ENCODE measurements at regions of chr1 and their contacts with region 1.

Region 1: GRCh38 chr1:27145934-27146354 is 9.0 kb downstream of the SLC9A1 start:
- DNase-seq: peak; percentile 94
- ATAC-seq: peak; percentile 97
- H3K4me3 ChIP-seq: no peak overlapping the region
- H3K27ac ChIP-seq: peak overlapping the region; percentile 68; the same call in 1 of the 2 replicates
- H3K4me1 ChIP-seq: peaks cover 18% of the 10 kb centered on the region
- H3K27me3 ChIP-seq: no peaks in the 10 kb centered on the region
- CTCF ChIP-seq: no peak
- POLR2A ChIP-seq: no peak; the same call in 1 of the 2 replicates
- RAD21 ChIP-seq: peak; percentile 30; the same call in 1 of the 2 replicates

Region 2: GRCh38 chr1:27120854-27121253 is 25.1 kb before region 1 on chr1:
- CTCF ChIA-PET with region 1: no interaction called
- POLR2A ChIA-PET with region 1: no interaction called
- dilution Hi-C with region 1: no loop called
- in situ Hi-C with region 1: loop called (anchors 5 kb)
- intact Hi-C with region 1: loop called (anchors 1 kb)
- DNase-seq: no peak
- ATAC-seq: no peak
- H3K4me3 ChIP-seq: no peak overlapping the region
- H3K27ac ChIP-seq: no peak overlapping the region
- H3K4me1 ChIP-seq: peaks cover 38% of the 10 kb centered on the region
- H3K27me3 ChIP-seq: no peaks in the 10 kb centered on the region
- CTCF ChIP-seq: no peak
- POLR2A ChIP-seq: no peak
- RAD21 ChIP-seq: no peak

Region 3: DNA sequence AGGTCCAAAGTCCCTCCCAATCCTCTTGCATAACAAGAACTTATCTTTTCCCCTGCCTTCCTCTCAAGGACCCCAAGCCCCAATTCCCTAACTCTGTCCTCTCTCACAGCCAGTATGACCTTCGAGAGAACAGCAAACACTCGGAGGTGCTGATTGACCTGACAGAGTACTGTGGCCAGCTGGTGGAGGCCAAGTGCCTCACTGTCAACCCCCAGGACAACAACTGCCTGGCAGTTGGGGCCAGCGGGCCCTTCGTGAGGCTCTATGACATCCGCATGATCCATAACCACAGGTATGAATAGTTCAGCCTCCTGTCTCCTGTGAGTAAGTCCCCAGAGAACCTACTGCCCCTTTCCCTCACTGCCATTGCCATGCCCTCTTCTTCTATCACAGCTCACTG is 146.2 kb after region 1 on chr1:
- CTCF ChIA-PET with region 1: no interaction called
- POLR2A ChIA-PET with region 1: no interaction called
- dilution Hi-C with region 1: no loop called
- in situ Hi-C with region 1: no loop called
- intact Hi-C with region 1: no loop called
- DNase-seq: peak; percentile 49
- ATAC-seq: no peak
- H3K4me3 ChIP-seq: no peak overlapping the region
- H3K27ac ChIP-seq: no peak overlapping the region
- H3K4me1 ChIP-seq: no peaks in the 10 kb centered on the region
- H3K27me3 ChIP-seq: no peaks in the 10 kb centered on the region
- CTCF ChIP-seq: no peak
- POLR2A ChIP-seq: no peak
- RAD21 ChIP-seq: no peak